ENCODE measurements at regions of chr2 and their contacts with region 1.

Region 1: DNA sequence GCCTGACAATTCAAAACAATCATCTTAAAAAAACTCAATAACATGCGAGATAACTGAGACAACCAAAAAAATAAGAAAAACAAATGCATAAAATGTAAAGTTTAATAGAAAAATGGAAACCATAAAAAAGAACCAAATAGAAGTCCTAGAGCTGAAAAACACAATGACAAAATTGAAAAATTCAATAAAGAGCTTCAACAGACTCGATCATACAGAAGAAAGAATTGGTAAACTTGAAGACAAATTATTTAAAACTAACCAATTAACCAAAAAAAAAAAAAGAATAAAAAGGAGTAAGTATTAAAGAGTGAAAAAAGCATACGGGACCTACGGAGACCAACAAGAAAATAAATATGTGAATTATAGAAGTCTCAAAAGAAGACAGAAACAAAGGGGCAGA is 37.7 kb downstream of the GPC1 start:
- DNase-seq: no peak
- ATAC-seq: no peak
- H3K4me3 ChIP-seq: no peak overlapping the region
- H3K27ac ChIP-seq: no peak overlapping the region
- H3K4me1 ChIP-seq: no peaks in the 10 kb centered on the region
- H3K27me3 ChIP-seq: no peaks in the 10 kb centered on the region
- CTCF ChIP-seq: no peak

Region 2: DNA sequence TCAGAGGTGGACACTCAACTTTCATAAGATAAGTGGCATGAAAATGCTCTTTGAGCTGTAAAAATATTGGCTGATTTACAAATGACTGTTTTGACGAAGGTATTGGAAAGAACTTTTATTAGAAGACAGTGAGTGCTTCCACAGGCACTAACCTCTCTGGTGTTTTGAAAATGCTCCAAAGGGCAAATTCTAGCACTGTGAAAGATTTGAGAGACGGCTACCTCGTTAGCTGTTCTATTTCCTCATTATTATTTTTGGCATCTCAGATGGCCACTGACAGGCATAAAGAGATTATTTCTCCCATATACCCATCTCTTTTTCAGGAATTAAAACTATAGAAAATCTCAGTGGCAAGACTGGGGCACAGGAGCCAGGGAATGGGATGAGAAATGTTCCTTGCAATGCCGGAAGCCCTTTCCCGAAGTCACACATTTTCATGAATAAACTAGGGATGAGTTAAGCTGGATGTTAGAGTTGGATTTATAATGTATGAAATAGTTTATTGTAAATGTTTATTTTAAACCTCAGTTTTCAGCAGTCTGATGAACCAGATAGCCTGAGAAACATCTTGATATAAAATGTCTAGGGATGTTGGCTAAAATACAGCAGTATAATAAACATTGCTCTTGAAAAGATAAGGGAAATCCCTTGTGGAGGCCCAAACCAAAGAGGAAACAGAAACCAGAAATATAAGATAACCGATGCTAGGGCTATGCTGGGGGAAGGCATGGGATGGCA is 1870.8 kb before region 1 on chr2:
- CTCF ChIA-PET with region 1: no interaction called
- POLR2A ChIA-PET with region 1: interaction called, 15 read pairs
- in situ Hi-C with region 1: no loop called
- intact Hi-C with region 1: no loop called
- DNase-seq: no peak
- ATAC-seq: no peak
- H3K4me3 ChIP-seq: no peak overlapping the region
- H3K27ac ChIP-seq: no peak overlapping the region
- H3K4me1 ChIP-seq: peaks cover 4% of the 10 kb centered on the region
- H3K27me3 ChIP-seq: no peaks in the 10 kb centered on the region
- CTCF ChIP-seq: no peak

Region 3: DNA sequence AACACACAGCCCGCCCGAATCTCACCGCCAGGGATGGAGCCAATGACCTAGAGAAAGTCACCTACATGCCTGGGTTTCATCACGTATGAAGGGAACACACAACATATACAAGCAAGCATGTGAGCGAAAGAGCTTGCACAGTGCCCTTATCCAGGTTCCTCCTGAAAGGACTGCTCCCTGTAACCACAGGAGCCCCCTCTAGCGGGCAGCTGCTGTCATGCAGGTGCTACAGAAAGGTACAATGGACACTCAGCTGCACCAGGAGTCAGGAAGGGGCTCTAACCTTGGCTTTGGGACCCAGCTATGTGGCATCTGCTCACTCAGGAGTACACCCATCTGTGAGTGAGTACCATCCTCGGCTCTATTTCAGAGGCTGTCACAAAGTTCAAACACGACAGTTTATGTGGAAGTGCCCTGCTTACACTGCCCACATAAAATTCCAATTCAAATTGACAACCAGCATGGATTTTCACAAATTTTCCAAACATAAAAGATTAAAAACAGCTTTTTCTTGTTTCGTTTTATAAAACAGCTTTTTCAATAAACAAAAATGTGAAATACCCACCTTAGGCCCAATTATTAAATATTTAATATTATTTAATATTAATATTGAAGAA is 451.6 kb before region 1 on chr2:
- CTCF ChIA-PET with region 1: no interaction called
- POLR2A ChIA-PET with region 1: no interaction called
- in situ Hi-C with region 1: no loop called
- intact Hi-C with region 1: no loop called
- DNase-seq: peak; percentile 43
- ATAC-seq: peak; percentile 67
- H3K4me3 ChIP-seq: no peak overlapping the region
- H3K27ac ChIP-seq: no peak overlapping the region
- H3K4me1 ChIP-seq: peaks cover 16% of the 10 kb centered on the region
- H3K27me3 ChIP-seq: no peaks in the 10 kb centered on the region
- CTCF ChIP-seq: peak; percentile 95

Region 4: GRCh38 chr2:240509667-240510512 is 36.7 kb after region 1 on chr2:
- CTCF ChIA-PET with region 1: no interaction called
- POLR2A ChIA-PET with region 1: no interaction called
- in situ Hi-C with region 1: no loop called
- intact Hi-C with region 1: no loop called
- DNase-seq: no peak
- ATAC-seq: no peak
- H3K4me3 ChIP-seq: no peak overlapping the region
- H3K27ac ChIP-seq: no peak overlapping the region
- H3K4me1 ChIP-seq: no peaks in the 10 kb centered on the region
- H3K27me3 ChIP-seq: no peaks in the 10 kb centered on the region
- CTCF ChIP-seq: no peak

Region 5: GRCh38 chr2:240624950-240625621 is 151.9 kb after region 1 on chr2 and contains the start of gene GPR35:
- CTCF ChIA-PET with region 1: no interaction called
- POLR2A ChIA-PET with region 1: no interaction called
- in situ Hi-C with region 1: no loop called
- intact Hi-C with region 1: no loop called
- DNase-seq: no peak
- ATAC-seq: peak; percentile 64
- H3K4me3 ChIP-seq: no peak within 1 kb of the TSS
- H3K27ac ChIP-seq: no peak within 1 kb of the TSS
- H3K4me1 ChIP-seq: no peaks in the 10 kb centered on the region; the same call in 1 of the 2 replicates
- H3K27me3 ChIP-seq: no peaks in the 10 kb centered on the region
- CTCF ChIP-seq: no peak
- total RNA-seq, gene GPR35: 1.3 TPM